ENCODE measurements at regions of chr9 and their contacts with region 1.

Region 1: GRCh38 chr9:101601904-101602765 is 7.4 kb upstream of the PPP3R2 start:
- ATAC-seq: peak; percentile 49 to 90 (median 69)
- H3K4me3 ChIP-seq: no peak overlapping the region
- H3K27ac ChIP-seq: no peak overlapping the region
- H3K4me1 ChIP-seq: no peaks in the 10 kb centered on the region

Region 2: GRCh38 chr9:101705135-101705661 is 103.1 kb after region 1 on chr9:
- in situ Hi-C with region 1: loop called in 1 of 9 experiments (anchors 25 kb)
- ATAC-seq: peak in 6 of 8 experiments; percentile 37 to 99 (median 69)
- H3K4me3 ChIP-seq: peak overlapping the region in 1 of 5 donors; percentile 29
- H3K27ac ChIP-seq: no peak overlapping the region
- H3K4me1 ChIP-seq: peaks cover 13 to 21% of the 10 kb centered on the region in 2 donors

Region 3: GRCh38 chr9:101881508-101881907 is 279.4 kb after region 1 on chr9:
- in situ Hi-C with region 1: loop called in 1 of 9 experiments (anchors 10 kb)
- ATAC-seq: peak in 1 of 8 experiments; percentile 44
- H3K4me3 ChIP-seq: no peak overlapping the region
- H3K27ac ChIP-seq: no peak overlapping the region
- H3K4me1 ChIP-seq: no peaks in the 10 kb centered on the region

Measured in motor neuron (in vitro differentiated cells).